Astrocyte of the cerebellum (primary cell): ENCODE measurements at regions of chr1 and their contacts with region 1.

Region 1: DNA sequence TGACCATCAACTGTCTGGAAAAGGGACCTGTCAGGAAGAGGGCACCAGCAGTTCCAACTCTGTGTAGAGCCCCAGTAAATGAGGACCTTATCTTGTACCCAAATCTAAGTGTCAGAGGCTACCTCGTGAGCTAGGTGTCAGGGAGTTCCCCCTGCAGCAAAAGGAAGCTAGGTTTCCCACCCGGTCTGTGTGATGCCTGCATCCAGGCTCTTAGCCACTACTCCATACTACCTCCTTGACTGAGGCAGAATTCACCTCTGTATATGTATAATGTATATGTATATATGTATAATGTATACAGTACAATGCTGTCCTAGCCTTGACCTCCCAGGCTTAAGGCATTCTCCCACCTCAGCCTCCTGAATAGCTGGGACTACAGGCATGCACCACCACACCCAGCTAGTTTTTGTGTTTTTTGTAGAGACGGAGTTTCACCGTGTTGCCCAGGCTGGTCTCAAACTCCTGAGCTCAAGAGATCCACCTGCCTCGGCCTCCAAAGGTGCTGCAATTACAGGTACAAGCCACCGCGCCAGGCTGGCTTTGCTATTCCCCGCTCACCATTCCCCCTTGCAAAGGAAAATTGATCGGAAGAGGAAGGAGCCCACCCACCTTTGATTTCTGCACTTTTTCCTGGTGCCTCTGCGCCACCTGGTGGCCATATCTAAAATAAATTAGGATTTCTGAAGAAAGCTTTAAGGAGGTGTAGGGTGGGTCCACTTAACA is 15.7 kb upstream of the LUZP1 start:
- DNase-seq: no peak
- H3K4me3 ChIP-seq: peak overlapping the region; percentile 21
- CTCF ChIP-seq: peak; percentile 60

Region 2: DNA sequence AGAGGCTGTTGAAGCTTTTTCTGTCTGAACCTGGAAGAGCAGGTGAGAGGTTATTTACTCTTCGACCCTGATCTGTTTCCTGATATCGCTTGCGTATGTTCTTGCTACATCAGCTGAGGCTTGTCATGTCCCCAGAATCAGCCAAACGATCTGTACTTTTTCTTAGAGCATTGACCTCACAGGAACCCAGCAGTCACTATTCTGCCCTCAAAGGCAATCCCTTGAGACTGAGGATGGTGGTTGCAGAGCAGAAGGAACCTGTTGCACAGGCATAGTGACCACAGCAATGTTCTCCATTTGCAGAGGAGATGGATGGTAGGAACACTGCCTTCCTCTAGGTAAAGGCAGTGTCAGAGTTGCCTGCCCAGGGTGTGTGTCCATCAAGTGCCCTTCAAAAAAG is 200.4 kb before region 1 on chr1:
- in situ Hi-C with region 1: loop called (anchors 10 kb)
- DNase-seq: no peak
- H3K4me3 ChIP-seq: no peak overlapping the region
- CTCF ChIP-seq: no peak

Region 3: DNA sequence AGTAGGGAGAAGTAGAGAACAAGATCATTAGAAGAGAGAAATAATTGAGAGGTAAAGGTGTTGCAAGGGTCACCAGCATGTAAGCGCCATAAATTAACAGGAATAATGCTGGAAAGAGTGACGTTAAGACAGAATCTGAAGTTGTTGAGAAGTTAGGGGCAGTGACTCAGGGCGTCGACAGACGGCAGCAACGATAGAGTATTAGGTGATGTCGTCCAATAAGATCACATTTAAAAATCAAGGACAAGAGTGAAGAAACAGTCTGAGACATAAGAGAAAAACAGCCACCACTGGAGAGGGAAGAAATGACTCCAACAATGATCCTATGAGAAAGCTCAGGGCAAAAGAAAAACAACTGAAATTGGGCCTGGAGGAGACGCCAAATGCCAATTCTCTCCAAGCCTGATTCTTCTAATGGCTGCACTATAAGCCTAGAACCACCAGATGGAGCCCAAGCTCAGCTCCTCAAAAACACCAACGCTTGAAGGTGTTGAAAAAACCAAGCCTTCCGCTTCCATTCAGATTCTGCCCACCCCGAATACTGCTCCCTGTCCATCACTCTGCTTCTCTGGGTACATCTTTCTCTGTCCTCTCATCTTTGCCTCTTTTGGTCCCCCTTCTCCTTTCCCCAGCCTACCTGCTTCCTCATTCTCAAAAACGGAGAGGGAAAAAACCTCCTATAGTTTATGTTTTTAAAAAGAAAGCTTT is 85.8 kb before region 1 on chr1:
- in situ Hi-C with region 1: loop called (anchors 5 kb)
- DNase-seq: peak; percentile 76
- H3K4me3 ChIP-seq: no peak overlapping the region
- CTCF ChIP-seq: peak; percentile 94

Region 4: DNA sequence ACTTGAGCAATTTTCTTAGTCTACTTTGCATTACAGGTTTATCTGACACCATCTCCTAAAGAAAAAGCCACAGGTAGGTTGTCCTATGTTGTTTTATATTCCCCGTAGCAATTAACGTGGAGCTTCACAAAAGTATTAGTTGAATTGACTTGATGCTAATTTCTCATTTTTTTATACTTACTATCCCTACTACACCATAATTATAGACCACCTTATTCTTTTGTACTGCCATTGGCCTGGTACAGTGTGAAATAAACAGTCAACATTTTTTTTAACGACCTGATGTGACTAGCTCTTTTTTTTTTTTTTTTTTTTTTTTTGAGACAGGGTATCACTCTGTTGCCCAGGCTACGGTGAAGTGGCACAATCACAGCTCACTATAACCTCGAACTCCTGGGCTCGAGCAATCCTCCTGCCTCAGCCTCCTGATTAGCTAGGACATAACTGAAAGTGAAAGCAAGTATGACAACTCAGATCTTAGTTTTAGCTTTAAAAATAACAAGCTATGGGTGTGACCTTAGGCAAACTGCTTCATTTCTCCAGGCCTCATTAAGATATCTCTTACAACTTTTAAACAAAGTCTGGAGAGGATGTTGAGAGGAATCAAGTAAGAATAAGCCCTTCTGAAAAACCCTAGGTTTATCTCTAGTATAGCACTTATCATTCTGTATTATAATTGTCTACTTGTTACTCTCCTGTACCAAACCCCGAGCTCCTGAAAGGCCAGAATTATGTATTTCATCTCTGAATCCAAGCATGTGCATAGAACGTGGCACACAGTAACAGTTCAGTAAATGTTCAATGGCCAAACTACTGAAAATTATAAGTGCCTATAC is 65.2 kb before region 1 on chr1:
- in situ Hi-C with region 1: no loop called
- DNase-seq: no peak
- H3K4me3 ChIP-seq: no peak overlapping the region
- CTCF ChIP-seq: no peak

Region 5: GRCh38 chr1:23263380-23263887 is 79.1 kb after region 1 on chr1:
- in situ Hi-C with region 1: loop called (anchors 5 kb)
- DNase-seq: no peak
- H3K4me3 ChIP-seq: no peak overlapping the region
- CTCF ChIP-seq: no peak